CD8-positive, alpha-beta T cell (primary cell): ENCODE measurements at regions of chr12 and their contacts with region 1.

Region 1: GRCh38 chr12:122752464-122753318 is at the start of gene DENR:
- DNase-seq: peak; percentile 99
- ATAC-seq: peak; percentile 96
- H3K4me3 ChIP-seq: peak within 1 kb of the TSS; percentile 80 to 90
- H3K4me3 Mint-ChIP-seq: peak within 1 kb of the TSS; percentile 96
- H3K27ac ChIP-seq: peak within 1 kb of the TSS; percentile 87 to 94
- H3K27ac Mint-ChIP-seq: peak within 1 kb of the TSS; percentile 97
- H3K4me1 ChIP-seq: peaks cover 26% of the 10 kb centered on the region
- H3K4me1 Mint-ChIP-seq: peaks cover 47% of the 10 kb centered on the region
- H3K27me3 ChIP-seq: no peaks in the 10 kb centered on the region
- H3K27me3 Mint-ChIP-seq: no peaks in the 10 kb centered on the region
- CTCF ChIP-seq: peak; percentile 56
- total RNA-seq, gene DENR: 27.8 to 29.7 TPM

Region 2: DNA sequence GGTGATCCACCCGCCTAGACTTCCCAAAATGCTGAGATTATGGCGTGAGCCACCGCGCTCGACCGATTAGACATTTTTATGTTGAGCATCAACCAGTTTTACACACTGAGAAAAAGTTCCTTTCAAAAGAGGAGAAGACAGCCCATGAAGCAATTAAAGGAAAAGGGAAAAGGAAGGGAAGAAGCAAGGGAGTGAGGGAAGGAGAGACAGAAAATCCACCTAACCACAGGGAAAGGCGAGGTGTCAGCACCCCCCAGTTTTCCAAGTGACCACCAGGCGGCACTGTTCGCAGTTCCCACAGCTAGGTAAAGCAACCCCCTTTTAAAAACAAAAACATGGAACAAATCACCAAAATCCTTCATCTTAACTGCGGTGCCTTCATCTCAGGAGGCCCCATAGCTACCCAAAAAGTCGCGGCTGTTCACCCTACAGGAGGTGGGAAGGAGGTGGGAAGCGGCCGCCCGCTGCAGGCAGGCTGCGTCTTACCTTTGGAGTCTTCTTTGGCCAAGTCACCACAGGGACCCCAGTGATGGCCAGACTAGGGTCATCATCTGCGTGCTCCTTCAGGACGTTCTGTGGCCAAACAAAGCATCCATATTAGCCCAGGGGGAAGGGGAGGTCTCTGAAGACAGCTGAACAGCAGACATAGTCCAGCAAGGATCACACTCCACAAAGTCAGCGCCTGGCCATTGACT is 1258.5 kb before region 1 on chr12:
- CTCF ChIA-PET with region 1: no interaction called
- POLR2A ChIA-PET with region 1: no interaction called
- intact Hi-C with region 1: no loop called
- DNase-seq: peak; percentile 31 to 76 (median 67)
- ATAC-seq: peak; percentile 67
- H3K4me3 ChIP-seq: no peak overlapping the region
- H3K4me3 Mint-ChIP-seq: no peak overlapping the region
- H3K27ac ChIP-seq: no peak overlapping the region
- H3K27ac Mint-ChIP-seq: peak overlapping the region; percentile 27
- H3K4me1 ChIP-seq: peaks cover 16% of the 10 kb centered on the region
- H3K4me1 Mint-ChIP-seq: peaks cover 21% of the 10 kb centered on the region
- H3K27me3 ChIP-seq: no peaks in the 10 kb centered on the region
- H3K27me3 Mint-ChIP-seq: no peaks in the 10 kb centered on the region
- CTCF ChIP-seq: peak; percentile 87

Region 3: DNA sequence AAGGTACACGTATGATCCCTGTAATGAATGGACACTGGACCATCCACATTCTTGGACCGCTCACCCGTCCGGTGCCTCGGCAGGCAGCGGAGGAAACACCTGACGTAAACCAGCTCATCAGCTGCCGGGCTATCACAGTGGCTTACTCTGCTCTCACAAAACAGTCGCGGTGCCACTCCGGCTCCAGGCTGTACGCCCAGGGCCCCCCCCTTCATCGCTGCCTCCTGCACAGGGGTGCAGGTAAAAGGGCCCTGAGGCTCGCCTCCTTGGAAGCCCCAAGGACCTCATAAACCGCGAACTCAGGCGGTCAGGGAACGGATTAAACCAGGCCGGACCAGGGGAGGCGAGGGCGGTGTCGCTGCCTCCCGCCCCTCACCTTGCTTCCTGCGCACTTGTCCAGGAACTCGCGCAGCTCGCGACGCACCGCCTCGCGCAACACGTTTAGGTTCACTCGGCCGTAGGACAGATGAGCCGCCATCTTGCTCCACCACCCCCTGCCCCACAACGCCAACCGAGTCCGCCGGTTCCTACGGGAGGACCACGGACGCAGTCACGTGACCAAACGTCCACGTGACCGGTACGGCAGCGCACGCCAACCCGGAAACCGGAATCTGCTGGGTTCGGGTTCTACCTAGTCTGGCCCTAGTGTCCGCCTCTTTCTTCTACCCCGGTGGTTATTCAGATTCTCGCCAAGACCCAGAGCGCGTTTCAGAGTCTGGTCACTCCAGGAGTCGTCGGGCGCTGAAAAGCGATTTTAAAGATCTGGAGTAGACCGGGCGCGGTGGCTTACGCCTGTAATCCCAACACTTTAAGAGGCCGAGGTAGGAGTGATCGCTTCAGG is 486.5 kb before region 1 on chr12 and contains the start of gene VPS33A:
- CTCF ChIA-PET with region 1: no interaction called
- POLR2A ChIA-PET with region 1: interaction called, 3 read pairs
- intact Hi-C with region 1: loop called (anchors 1 to 2 kb)
- DNase-seq: peak; percentile 82 to 97 (median 92)
- ATAC-seq: peak; percentile 72
- H3K4me3 ChIP-seq: peak within 1 kb of the TSS; percentile 89 to 95
- H3K4me3 Mint-ChIP-seq: peak within 1 kb of the TSS; percentile 97
- H3K27ac ChIP-seq: peak within 1 kb of the TSS; percentile 95 to 96
- H3K27ac Mint-ChIP-seq: peak within 1 kb of the TSS; percentile 100
- H3K4me1 ChIP-seq: peaks cover 9% of the 10 kb centered on the region
- H3K4me1 Mint-ChIP-seq: peaks cover 36% of the 10 kb centered on the region
- H3K27me3 ChIP-seq: no peaks in the 10 kb centered on the region
- H3K27me3 Mint-ChIP-seq: no peaks in the 10 kb centered on the region
- CTCF ChIP-seq: no peak
- total RNA-seq, gene VPS33A: 11.6 to 13.1 TPM

Region 4: GRCh38 chr12:122500685-122501488 is 251.8 kb before region 1 on chr12 and contains the start of gene ZCCHC8:
- CTCF ChIA-PET with region 1: no interaction called
- POLR2A ChIA-PET with region 1: no interaction called
- intact Hi-C with region 1: loop called (anchors 1 kb)
- DNase-seq: peak; percentile 92 to 98 (median 96)
- ATAC-seq: peak; percentile 92
- H3K4me3 ChIP-seq: peak within 1 kb of the TSS; percentile 74 to 80
- H3K4me3 Mint-ChIP-seq: peak within 1 kb of the TSS; percentile 97
- H3K27ac ChIP-seq: peak within 1 kb of the TSS; percentile 90 to 92
- H3K27ac Mint-ChIP-seq: peak within 1 kb of the TSS; percentile 99
- H3K4me1 ChIP-seq: peaks cover 17% of the 10 kb centered on the region
- H3K4me1 Mint-ChIP-seq: peaks cover 40% of the 10 kb centered on the region
- H3K27me3 ChIP-seq: no peaks in the 10 kb centered on the region
- H3K27me3 Mint-ChIP-seq: no peaks in the 10 kb centered on the region
- CTCF ChIP-seq: no peak
- total RNA-seq, gene ZCCHC8: 53.4 to 55.6 TPM

Region 5: DNA sequence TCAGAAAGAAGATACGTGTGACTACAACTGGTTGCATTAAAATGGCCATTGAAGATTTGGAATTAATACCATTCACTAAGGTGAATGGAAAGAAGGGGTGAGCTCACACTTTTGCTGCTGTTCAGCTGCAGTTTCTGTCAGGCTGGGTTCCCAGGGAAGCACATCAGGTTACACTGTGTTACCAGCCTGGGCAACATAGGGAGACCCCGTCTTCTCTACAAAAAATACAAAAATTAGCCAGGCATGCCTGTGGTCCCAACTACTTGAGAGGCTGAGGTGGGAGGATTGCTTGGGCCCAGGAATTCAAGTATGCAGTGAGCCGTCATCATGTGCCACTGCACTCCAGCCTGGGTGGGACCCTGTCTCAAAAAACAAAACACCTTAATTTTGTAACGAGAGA is 239.0 kb before region 1 on chr12:
- CTCF ChIA-PET with region 1: no interaction called
- POLR2A ChIA-PET with region 1: no interaction called
- intact Hi-C with region 1: no loop called
- DNase-seq: no peak
- ATAC-seq: no peak
- H3K4me3 ChIP-seq: no peak overlapping the region
- H3K4me3 Mint-ChIP-seq: no peak overlapping the region
- H3K27ac ChIP-seq: no peak overlapping the region
- H3K27ac Mint-ChIP-seq: no peak overlapping the region
- H3K4me1 ChIP-seq: no peaks in the 10 kb centered on the region
- H3K4me1 Mint-ChIP-seq: peaks cover 14% of the 10 kb centered on the region
- H3K27me3 ChIP-seq: no peaks in the 10 kb centered on the region
- H3K27me3 Mint-ChIP-seq: no peaks in the 10 kb centered on the region
- CTCF ChIP-seq: no peak

Region 6: GRCh38 chr12:122614839-122615238 is 137.9 kb before region 1 on chr12:
- CTCF ChIA-PET with region 1: no interaction called
- POLR2A ChIA-PET with region 1: no interaction called
- intact Hi-C with region 1: loop called in 1 of 2 experiments (anchors 10 kb)
- DNase-seq: no peak
- ATAC-seq: no peak
- H3K4me3 ChIP-seq: no peak overlapping the region
- H3K4me3 Mint-ChIP-seq: no peak overlapping the region
- H3K27ac ChIP-seq: no peak overlapping the region
- H3K27ac Mint-ChIP-seq: no peak overlapping the region
- H3K4me1 ChIP-seq: no peaks in the 10 kb centered on the region
- H3K4me1 Mint-ChIP-seq: no peaks in the 10 kb centered on the region
- H3K27me3 ChIP-seq: no peaks in the 10 kb centered on the region
- H3K27me3 Mint-ChIP-seq: no peaks in the 10 kb centered on the region
- CTCF ChIP-seq: no peak

Region 7: DNA sequence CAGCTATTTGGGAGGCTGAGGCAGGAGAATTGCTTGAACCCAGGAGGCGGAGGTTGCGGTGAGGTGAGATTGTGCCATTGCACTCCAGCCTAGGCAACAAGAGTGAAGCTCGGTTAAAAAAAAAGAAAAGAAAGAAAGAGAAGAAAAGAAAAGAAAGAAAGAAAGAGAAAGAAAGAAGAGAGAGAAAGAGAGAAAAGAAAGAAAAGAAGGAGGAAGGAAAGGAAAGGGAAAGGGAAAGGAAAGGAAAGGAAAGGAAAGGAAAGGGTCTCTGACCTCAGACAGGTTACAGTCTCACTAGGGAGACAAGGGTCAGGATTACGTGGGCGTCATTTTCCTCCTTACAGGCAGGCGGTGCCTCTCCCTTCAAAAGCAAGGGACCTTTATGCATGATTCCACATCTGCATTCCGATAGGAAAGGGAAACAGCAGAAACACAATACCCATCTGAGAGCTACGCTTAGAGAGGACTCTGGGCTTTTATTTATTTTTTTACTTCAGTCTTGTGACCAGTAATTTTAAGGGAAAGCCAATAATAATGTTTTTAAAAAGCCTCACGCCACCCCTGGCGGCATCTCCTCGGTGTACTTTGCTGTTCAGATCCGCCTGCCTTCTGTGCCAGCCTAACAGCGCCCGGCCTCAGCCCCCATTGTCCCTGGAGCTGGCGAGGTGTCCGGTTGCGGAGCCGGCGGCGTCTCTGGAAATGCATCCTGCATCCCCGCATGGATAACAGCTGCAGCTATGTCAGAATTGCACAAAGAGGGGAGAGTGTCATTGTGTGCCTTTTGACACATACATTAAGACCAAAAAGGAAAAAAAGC is 81.6 kb after region 1 on chr12:
- CTCF ChIA-PET with region 1: no interaction called
- POLR2A ChIA-PET with region 1: interaction called, 6 read pairs
- intact Hi-C with region 1: loop called in 1 of 2 experiments (anchors 1 kb)
- DNase-seq: peak in 3 of 9 experiments; percentile 22 to 56 (median 44)
- ATAC-seq: peak; percentile 15
- H3K4me3 ChIP-seq: peak overlapping the region; percentile 40 to 42
- H3K4me3 Mint-ChIP-seq: peak overlapping the region; percentile 91
- H3K27ac ChIP-seq: no peak overlapping the region
- H3K27ac Mint-ChIP-seq: peak overlapping the region; percentile 94
- H3K4me1 ChIP-seq: peaks cover 20% of the 10 kb centered on the region
- H3K4me1 Mint-ChIP-seq: peaks cover 42% of the 10 kb centered on the region
- H3K27me3 ChIP-seq: no peaks in the 10 kb centered on the region
- H3K27me3 Mint-ChIP-seq: no peaks in the 10 kb centered on the region
- CTCF ChIP-seq: no peak

Region 8: GRCh38 chr12:123601602-123602489 is 849.2 kb after region 1 on chr12 and contains the start of gene DDX55:
- CTCF ChIA-PET with region 1: no interaction called
- POLR2A ChIA-PET with region 1: no interaction called
- intact Hi-C with region 1: loop called in 1 of 2 experiments (anchors 10 kb)
- DNase-seq: peak; percentile 71 to 94 (median 87)
- ATAC-seq: peak; percentile 93
- H3K4me3 ChIP-seq: peak within 1 kb of the TSS; percentile 92 to 94
- H3K4me3 Mint-ChIP-seq: peak within 1 kb of the TSS; percentile 98
- H3K27ac ChIP-seq: peak within 1 kb of the TSS; percentile 78 to 89
- H3K27ac Mint-ChIP-seq: peak within 1 kb of the TSS; percentile 94
- H3K4me1 ChIP-seq: peaks cover 16% of the 10 kb centered on the region
- H3K4me1 Mint-ChIP-seq: peaks cover 31% of the 10 kb centered on the region
- H3K27me3 ChIP-seq: no peaks in the 10 kb centered on the region
- H3K27me3 Mint-ChIP-seq: no peaks in the 10 kb centered on the region
- CTCF ChIP-seq: peak; percentile 42
- total RNA-seq, gene DDX55: 41.1 to 44.5 TPM

Region 9: GRCh38 chr12:124609041-124609995 is 1856.6 kb after region 1 on chr12:
- CTCF ChIA-PET with region 1: no interaction called
- POLR2A ChIA-PET with region 1: no interaction called
- intact Hi-C with region 1: loop called in 1 of 2 experiments (anchors 10 kb)
- DNase-seq: peak; percentile 77 to 95 (median 90)
- ATAC-seq: peak; percentile 93
- H3K4me3 ChIP-seq: peak overlapping the region in 1 of 2 experiments; percentile 21
- H3K4me3 Mint-ChIP-seq: peak overlapping the region; percentile 82
- H3K27ac ChIP-seq: no peak overlapping the region
- H3K27ac Mint-ChIP-seq: peak overlapping the region; percentile 76
- H3K4me1 ChIP-seq: peaks cover 30% of the 10 kb centered on the region
- H3K4me1 Mint-ChIP-seq: peaks cover 37% of the 10 kb centered on the region
- H3K27me3 ChIP-seq: no peaks in the 10 kb centered on the region
- H3K27me3 Mint-ChIP-seq: no peaks in the 10 kb centered on the region
- CTCF ChIP-seq: no peak